Activated naive CD4-positive, alpha-beta T cell treated with anti-CD3 and anti-CD28 coated beads for 36 hours (primary cell): ENCODE measurements at regions of chr5 and their contacts with region 1.

Region 1: GRCh38 chr5:134555890-134556311 is 30.4 kb downstream of the JADE2 start:
- DNase-seq: peak; percentile 98
- H3K4me3 Mint-ChIP-seq: peak overlapping the region; percentile 80
- H3K27ac Mint-ChIP-seq: peak overlapping the region; percentile 100
- H3K4me1 Mint-ChIP-seq: peaks cover 38% of the 10 kb centered on the region
- H3K27me3 Mint-ChIP-seq: no peaks in the 10 kb centered on the region

Region 2: GRCh38 chr5:134465816-134466240 is 90.1 kb before region 1 on chr5:
- CTCF ChIA-PET with region 1: interaction called, 3 read pairs
- intact Hi-C with region 1: loop called (anchors 1 kb)
- DNase-seq: peak; percentile 73
- H3K4me3 Mint-ChIP-seq: peak overlapping the region; percentile 81
- H3K27ac Mint-ChIP-seq: peak overlapping the region; percentile 81
- H3K4me1 Mint-ChIP-seq: peaks cover 19% of the 10 kb centered on the region
- H3K27me3 Mint-ChIP-seq: no peaks in the 10 kb centered on the region

Region 3: GRCh38 chr5:134503088-134503946 is 52.6 kb before region 1 on chr5:
- CTCF ChIA-PET with region 1: no interaction called
- intact Hi-C with region 1: loop called (anchors 1 kb)
- DNase-seq: peak; percentile 91
- H3K4me3 Mint-ChIP-seq: peak overlapping the region; percentile 30
- H3K27ac Mint-ChIP-seq: peak overlapping the region; percentile 92
- H3K4me1 Mint-ChIP-seq: peaks cover 33% of the 10 kb centered on the region
- H3K27me3 Mint-ChIP-seq: no peaks in the 10 kb centered on the region

Region 4: DNA sequence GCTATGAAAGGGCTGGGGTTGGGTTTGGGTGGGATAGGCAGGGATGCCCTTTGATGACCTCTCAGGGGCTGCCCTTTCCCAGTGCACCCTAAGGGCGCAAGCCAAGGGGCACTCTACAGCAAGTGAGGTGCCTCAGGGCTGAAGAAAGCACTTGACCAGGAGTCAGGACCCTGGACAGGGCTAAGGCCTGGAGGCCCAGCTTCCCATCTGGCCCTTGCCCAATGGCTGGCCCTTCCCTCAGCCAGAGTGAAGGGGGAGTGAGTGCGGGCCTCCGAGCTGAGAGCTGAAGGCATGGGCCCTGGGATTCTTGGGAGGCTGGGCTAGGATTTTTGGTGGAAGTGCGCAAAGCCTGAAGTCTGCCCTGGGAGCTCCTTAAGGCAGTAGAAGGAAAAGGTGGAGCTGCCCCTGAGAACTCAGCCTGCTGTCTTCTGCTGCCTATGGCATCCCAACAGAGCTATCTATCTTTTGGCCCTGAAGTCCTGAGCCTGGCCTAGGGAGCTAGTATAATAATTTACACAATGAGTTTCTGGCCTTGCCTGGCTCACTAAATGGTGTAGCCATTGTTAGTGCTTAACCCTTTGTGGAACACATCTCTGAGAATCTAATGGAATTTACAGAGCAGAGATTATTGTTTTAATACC is 14.0 kb before region 1 on chr5:
- CTCF ChIA-PET with region 1: interaction called, 22 read pairs
- intact Hi-C with region 1: loop called (anchors 1 kb)
- DNase-seq: peak; percentile 57
- H3K4me3 Mint-ChIP-seq: no peak overlapping the region
- H3K27ac Mint-ChIP-seq: no peak overlapping the region
- H3K4me1 Mint-ChIP-seq: peaks cover 67% of the 10 kb centered on the region
- H3K27me3 Mint-ChIP-seq: no peaks in the 10 kb centered on the region

Region 5: DNA sequence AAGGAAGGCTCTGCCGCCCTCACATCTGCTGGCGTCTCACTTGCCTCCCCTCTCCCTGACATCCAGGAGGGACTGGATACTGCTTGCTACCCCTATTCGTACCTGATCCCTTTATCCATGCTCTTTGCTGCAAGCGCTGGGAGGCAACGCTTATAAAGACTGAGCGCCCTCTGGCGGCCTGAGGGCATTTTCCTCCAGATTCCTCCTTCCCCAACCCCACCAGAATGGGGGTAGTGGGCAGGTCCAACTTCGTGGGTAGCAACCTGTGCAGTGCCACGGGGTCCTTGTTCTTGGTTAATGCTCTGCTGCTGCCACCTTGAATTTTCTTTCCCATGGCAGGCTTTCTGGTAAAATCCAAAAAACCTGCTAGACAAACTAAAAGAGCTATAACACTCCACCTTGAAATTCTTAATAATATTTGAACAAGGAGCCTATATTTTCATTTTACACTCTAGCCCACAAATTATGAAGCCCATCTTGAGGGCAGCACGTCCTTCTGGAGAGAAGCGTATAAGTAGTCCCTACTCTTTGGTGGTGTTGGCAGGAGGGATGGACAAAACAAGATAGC is 22.0 kb after region 1 on chr5:
- CTCF ChIA-PET with region 1: interaction called, 19 read pairs
- intact Hi-C with region 1: loop called (anchors 1 kb)
- DNase-seq: peak; percentile 91
- H3K4me3 Mint-ChIP-seq: no peak overlapping the region
- H3K27ac Mint-ChIP-seq: peak overlapping the region; percentile 69
- H3K4me1 Mint-ChIP-seq: peaks cover 15% of the 10 kb centered on the region
- H3K27me3 Mint-ChIP-seq: no peaks in the 10 kb centered on the region

Region 6: DNA sequence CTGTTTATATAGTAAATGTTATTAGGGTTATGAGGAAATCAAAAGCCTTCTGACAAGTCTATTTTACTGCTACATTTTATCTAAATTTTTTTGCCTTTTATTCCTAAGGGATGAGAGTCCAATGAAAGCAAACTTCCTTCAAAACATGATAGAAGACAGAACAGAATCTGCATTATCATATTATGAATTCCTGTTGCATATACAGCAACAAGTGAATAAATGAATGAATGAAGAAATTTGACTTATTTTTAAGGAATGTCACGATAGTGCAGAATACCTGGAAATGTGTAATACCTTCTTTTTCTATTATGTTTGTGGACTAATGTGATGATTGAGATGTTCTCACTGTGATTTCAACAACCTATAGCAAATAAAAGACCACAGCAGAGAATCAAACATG is 169.0 kb after region 1 on chr5:
- CTCF ChIA-PET with region 1: no interaction called
- intact Hi-C with region 1: no loop called
- DNase-seq: no peak
- H3K4me3 Mint-ChIP-seq: no peak overlapping the region
- H3K27ac Mint-ChIP-seq: no peak overlapping the region
- H3K4me1 Mint-ChIP-seq: no peaks in the 10 kb centered on the region
- H3K27me3 Mint-ChIP-seq: no peaks in the 10 kb centered on the region

Region 7: GRCh38 chr5:134845852-134846640 is 290.1 kb after region 1 on chr5 and contains the start of gene C5orf24:
- CTCF ChIA-PET with region 1: no interaction called
- intact Hi-C with region 1: loop called (anchors 5 kb)
- DNase-seq: peak; percentile 96
- H3K4me3 Mint-ChIP-seq: peak within 1 kb of the TSS; percentile 88
- H3K27ac Mint-ChIP-seq: peak within 1 kb of the TSS; percentile 97
- H3K4me1 Mint-ChIP-seq: peaks cover 32% of the 10 kb centered on the region
- H3K27me3 Mint-ChIP-seq: no peaks in the 10 kb centered on the region
- total RNA-seq, gene C5orf24: 17.6 to 21.2 TPM

Region 8: DNA sequence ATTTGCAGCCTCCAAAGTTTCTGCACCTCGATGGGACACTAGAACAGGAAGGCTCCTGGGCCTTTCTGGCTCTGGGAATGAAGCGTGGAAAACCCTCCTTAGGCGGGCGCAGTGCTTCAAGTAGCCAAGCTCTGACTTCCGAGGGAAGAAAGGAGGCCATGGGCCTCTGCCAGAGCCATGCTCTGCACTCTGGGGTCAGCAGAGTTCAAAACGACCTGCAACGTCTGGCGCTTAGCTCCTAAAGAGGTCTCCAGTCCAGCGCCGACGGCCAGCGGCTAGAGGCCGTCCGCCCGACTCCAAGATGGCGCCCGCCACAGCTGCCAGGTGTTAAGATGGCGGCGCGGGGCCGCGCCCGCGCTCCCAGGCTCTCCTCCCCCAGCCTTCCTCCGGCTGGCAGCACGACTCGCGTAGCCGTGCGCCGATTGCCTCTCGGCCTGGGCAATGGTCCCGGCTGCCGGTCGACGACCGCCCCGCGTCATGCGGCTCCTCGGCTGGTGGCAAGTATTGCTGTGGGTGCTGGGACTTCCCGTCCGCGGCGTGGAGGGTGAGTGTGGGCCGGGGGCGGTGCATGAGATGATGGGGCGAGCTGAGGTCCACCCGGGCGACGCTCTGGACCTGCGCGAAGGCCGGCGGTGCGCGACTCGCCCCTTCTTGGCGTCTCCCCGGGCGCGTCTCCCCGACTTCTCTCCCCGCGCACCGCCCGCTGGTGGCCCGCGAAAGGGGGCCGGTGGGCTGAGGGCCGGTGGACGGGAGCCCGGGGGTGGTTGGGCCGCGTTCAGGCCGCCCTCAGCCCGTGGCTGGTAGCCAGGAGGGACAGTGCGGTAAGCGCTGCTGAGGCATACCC is 318.3 kb after region 1 on chr5 and contains the start of gene TXNDC15:
- CTCF ChIA-PET with region 1: no interaction called
- intact Hi-C with region 1: loop called (anchors 1 kb)
- DNase-seq: peak; percentile 84
- H3K4me3 Mint-ChIP-seq: peak within 1 kb of the TSS; percentile 89
- H3K27ac Mint-ChIP-seq: peak within 1 kb of the TSS; percentile 92
- H3K4me1 Mint-ChIP-seq: peaks cover 30% of the 10 kb centered on the region
- H3K27me3 Mint-ChIP-seq: no peaks in the 10 kb centered on the region
- total RNA-seq, gene TXNDC15: 19.8 to 20.9 TPM